Heart left ventricle (tissue), 16 donors: ENCODE measurements at regions of chr17 and their contacts with region 1.

Region 1: GRCh38 chr17:69166957-69167356 is 25.3 kb upstream of the ABCA6 start:
- DNase-seq: no peak
- ATAC-seq: no peak
- H3K4me3 ChIP-seq: no peak overlapping the region
- H3K27ac ChIP-seq: no peak overlapping the region
- H3K4me1 ChIP-seq: peaks cover 0 to 8% (median 0%) of the 10 kb centered on the region in 12 donors
- H3K27me3 ChIP-seq: no peaks in the 10 kb centered on the region
- CTCF ChIP-seq: no peak
- POLR2A ChIP-seq: no peak

Region 2: GRCh38 chr17:69103557-69104233 is 63.3 kb before region 1 on chr17:
- intact Hi-C with region 1: loop called in 1 of 10 experiments (anchors 10 kb)
- DNase-seq: no peak
- ATAC-seq: no peak
- H3K4me3 ChIP-seq: no peak overlapping the region
- H3K27ac ChIP-seq: no peak overlapping the region
- H3K4me1 ChIP-seq: peaks cover 0 to 10% (median 0%) of the 10 kb centered on the region in 12 donors
- H3K27me3 ChIP-seq: no peaks in the 10 kb centered on the region
- CTCF ChIP-seq: no peak
- POLR2A ChIP-seq: no peak